ENCODE measurements at regions of chr14 and their contacts with region 1.

Region 1: GRCh38 chr14:53152890-53153701 is at the start of gene DDHD1:
- DNase-seq: peak; percentile 92
- ATAC-seq: peak; percentile 74
- H3K4me3 Mint-ChIP-seq: peak within 1 kb of the TSS; percentile 96
- H3K27ac Mint-ChIP-seq: peak within 1 kb of the TSS; percentile 98
- H3K4me1 Mint-ChIP-seq: peaks cover 29% of the 10 kb centered on the region
- H3K27me3 Mint-ChIP-seq: no peaks in the 10 kb centered on the region
- total RNA-seq, gene DDHD1: 63.1 to 65.1 TPM

Region 2: DNA sequence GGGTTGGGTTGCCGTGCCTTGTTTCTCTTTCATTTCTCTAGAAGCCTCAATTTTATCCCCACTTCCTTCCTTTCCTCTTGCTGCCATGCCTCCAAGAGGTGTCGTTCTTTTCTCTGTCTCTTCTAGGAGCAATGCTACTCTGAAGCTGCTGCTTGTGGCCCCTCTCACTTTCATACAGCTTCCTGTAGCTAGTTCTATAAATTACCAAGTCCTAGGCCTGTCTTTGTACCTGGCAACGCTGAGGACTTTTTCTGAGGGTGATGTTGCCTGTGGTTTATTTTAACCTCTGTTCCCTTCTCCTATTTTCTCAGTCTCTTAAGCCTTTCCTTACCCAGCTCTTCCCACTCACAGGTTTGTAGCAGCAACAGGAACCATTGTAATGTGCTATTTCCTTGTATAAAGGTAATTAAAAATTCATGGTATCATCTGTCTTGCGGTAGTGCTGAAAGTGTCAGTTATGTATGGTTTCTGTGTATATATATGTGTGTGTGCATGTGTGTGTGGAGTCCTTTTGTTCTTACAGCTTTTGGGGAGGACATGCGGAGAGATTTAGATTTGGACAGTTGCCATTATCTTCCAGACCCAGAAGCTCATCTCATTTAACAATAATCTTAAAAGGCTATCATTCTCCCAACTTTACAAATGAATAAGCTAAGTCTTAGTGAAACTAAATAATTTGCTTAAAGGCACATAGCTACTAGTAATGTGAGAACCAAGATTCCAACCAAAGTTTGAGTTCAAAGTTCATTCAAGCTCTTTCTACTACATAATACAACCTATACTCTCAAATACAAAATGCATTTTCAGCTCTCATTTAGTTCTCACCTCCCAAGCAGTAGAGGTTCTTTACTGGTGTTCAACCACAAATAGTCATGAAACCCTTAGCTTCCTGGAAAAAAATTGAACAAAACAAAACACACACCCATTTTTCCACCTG is 43.7 kb before region 1 on chr14:
- POLR2A ChIA-PET with region 1: interaction called, 125 read pairs
- DNase-seq: peak; percentile 56
- ATAC-seq: peak; percentile 91
- H3K4me3 Mint-ChIP-seq: no peak overlapping the region
- H3K27ac Mint-ChIP-seq: no peak overlapping the region
- H3K4me1 Mint-ChIP-seq: peaks cover 25% of the 10 kb centered on the region
- H3K27me3 Mint-ChIP-seq: no peaks in the 10 kb centered on the region

Region 3: DNA sequence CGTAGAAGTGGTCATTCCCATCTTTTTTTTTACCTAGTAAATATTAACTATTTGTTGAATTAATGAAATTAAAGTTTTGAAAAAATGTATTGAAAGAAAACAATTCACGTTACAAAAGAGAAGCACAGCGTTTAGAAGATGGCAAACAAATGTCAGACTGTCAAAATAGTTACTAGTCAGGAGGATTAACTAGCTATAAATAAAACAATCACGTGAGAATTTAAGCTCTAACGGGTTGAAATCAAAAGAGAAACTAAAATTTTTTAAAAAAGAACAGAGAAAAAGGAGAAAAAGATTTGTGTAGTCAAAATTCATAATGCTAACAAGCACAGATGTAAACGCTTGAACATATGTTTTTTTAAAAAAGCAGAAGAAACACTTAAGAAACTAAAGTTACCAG is 26.4 kb before region 1 on chr14:
- POLR2A ChIA-PET with region 1: interaction called, 13 read pairs
- DNase-seq: no peak
- ATAC-seq: no peak
- H3K4me3 Mint-ChIP-seq: peak overlapping the region; percentile 77
- H3K27ac Mint-ChIP-seq: peak overlapping the region; percentile 89
- H3K4me1 Mint-ChIP-seq: peaks cover 22% of the 10 kb centered on the region
- H3K27me3 Mint-ChIP-seq: no peaks in the 10 kb centered on the region

Region 4: GRCh38 chr14:53140585-53140984 is 12.5 kb before region 1 on chr14:
- POLR2A ChIA-PET with region 1: interaction called, 19 read pairs
- DNase-seq: no peak
- ATAC-seq: no peak
- H3K4me3 Mint-ChIP-seq: no peak overlapping the region
- H3K27ac Mint-ChIP-seq: no peak overlapping the region
- H3K4me1 Mint-ChIP-seq: peaks cover 43% of the 10 kb centered on the region
- H3K27me3 Mint-ChIP-seq: no peaks in the 10 kb centered on the region

Region 5: GRCh38 chr14:53217295-53217994 is 64.3 kb after region 1 on chr14:
- POLR2A ChIA-PET with region 1: interaction called, 24 read pairs
- DNase-seq: peak; percentile 90
- ATAC-seq: peak; percentile 97
- H3K4me3 Mint-ChIP-seq: peak overlapping the region; percentile 89
- H3K27ac Mint-ChIP-seq: peak overlapping the region; percentile 87
- H3K4me1 Mint-ChIP-seq: peaks cover 14% of the 10 kb centered on the region
- H3K27me3 Mint-ChIP-seq: peaks cover 1% of the 10 kb centered on the region

Measured in activated naive CD8-positive, alpha-beta T cell treated with anti-CD3 and anti-CD28 coated beads, Interleukin-2, amount 10 ng/mL, durations not matched to agents 7 days and 5 days (primary cell).